ENCODE measurements at regions of chr17 and their contacts with region 1.

Region 1: GRCh38 chr17:77254951-77255825 is 114.4 kb downstream of the SEC14L1 start:
- H3K4me3 ChIP-seq: no peak overlapping the region
- H3K27ac ChIP-seq: no peak overlapping the region
- H3K4me1 ChIP-seq: peaks cover 3% of the 10 kb centered on the region; the same call in 1 of the 2 replicates
- CTCF ChIP-seq: no peak

Region 2: DNA sequence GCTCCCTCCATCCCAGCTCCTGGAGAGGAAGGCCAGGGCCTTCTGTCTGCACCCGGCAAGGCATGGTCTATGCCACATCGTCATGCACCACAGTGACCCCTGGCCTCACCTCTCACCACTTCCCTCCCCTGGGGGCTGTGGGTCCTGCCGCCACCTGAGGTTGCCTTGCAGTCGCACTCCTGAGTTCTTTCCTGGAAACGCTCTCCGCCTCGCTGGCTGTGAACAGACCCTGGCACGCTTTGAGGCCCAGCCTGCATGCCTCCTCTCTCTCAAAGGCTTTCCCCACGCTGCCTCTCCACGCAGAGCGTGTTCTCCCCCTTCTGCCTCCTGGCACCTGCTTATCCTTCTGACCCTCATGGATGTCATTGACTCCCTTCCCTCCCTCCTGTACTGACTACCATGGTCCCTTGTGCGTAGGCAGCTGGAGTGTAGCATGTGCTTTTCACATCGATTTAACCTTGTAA is 69.0 kb before region 1 on chr17:
- CTCF ChIA-PET with region 1: no interaction called
- POLR2A ChIA-PET with region 1: no interaction called
- H3K4me3 ChIP-seq: no peak overlapping the region
- H3K27ac ChIP-seq: peak overlapping the region; percentile 35; the same call in 1 of the 2 replicates
- H3K4me1 ChIP-seq: peaks cover 11% of the 10 kb centered on the region
- CTCF ChIP-seq: no peak

Region 3: GRCh38 chr17:77285520-77286390 is 30.6 kb after region 1 on chr17:
- CTCF ChIA-PET with region 1: interaction called, 3 read pairs
- POLR2A ChIA-PET with region 1: interaction called, 25 read pairs
- H3K4me3 ChIP-seq: no peak overlapping the region
- H3K27ac ChIP-seq: peak overlapping the region; percentile 39; the same call in 1 of the 2 replicates
- H3K4me1 ChIP-seq: peaks cover 41% of the 10 kb centered on the region
- CTCF ChIP-seq: no peak